Adrenal gland (tissue), 19 donors: ENCODE measurements at regions of chr11 and their contacts with region 1.

Region 1: DNA sequence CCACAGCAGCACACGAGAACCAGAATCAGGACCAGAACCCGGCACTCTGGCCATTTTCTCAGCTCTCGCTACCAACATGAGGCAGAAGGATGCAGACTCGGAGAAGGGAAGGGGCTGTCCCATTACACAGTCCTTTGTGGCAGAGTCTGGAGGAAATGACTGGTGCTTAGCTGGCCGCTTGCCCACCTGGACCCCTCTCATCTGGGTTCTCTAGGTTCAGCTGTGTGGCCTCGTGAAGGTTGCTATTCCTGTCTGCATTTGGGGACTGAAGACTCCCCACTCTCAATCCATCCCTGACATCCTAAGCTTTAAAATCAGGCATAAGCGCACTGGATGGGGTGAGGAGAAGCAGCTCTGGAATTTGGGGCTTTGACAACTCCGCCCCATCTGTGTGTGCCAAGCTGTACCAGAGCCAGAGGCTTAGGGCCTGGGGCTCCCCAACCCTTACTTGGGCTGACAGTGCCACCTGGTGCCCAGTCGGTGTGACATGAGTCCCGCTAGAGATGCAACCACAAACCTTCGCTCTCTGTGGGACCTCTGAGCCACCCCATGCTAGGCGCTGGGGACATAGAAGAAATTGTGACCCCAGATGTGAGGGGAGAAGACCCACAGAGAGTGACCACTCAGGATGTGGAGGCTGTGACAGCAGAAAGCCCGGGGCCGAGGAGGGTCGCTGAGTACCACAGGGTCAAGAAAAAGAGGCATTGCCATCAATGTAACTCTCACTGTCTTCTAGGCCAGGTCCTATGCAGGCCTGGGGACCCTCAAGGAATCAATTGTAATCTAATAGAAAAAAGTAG is 35.9 kb upstream of the FCHSD2 start:
- DNase-seq: peak; percentile 84 to 95 (median 93)
- H3K4me3 ChIP-seq: no peak overlapping the region
- H3K27ac ChIP-seq: peak overlapping the region; percentile 3 to 87 (median 62)
- H3K4me1 ChIP-seq: peaks cover 19 to 41% of the 10 kb centered on the region in 2 donors
- H3K27me3 ChIP-seq: no peaks in the 10 kb centered on the region
- CTCF ChIP-seq: peak; percentile 72 to 96 (median 90)
- POLR2A ChIP-seq: no peak

Region 2: DNA sequence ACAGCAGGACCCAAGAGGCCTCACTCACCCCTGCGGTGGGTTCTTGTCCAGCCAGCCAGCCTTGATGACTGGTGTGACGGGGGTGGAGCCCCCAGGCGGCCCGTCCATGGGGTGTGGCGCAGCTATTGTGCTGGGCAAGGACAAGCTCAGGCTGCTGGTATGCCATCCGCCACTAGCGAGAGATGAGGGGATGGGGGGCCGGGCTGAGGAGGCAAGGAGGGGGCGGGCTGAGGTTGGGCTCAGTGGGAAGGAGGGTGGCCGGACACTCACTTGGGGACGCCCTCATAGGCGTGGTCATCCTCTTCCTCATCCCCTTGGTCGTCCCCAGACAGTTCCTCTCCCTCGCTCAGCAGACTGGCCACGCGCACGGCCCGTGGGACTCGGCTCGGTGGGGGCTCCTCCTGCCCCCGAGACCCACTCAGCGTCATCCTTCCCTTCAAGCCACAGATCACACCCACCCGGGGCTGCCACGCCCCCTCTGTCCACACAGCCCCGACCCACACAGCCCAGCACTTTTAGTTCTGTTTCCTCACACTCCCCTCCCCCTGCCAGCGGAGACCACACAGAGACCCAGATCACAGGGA is 465.7 kb before region 1 on chr11:
- intact Hi-C with region 1: loop called in 1 of 2 experiments (anchors 10 kb)
- DNase-seq: peak; percentile 57 to 81 (median 69)
- H3K4me3 ChIP-seq: no peak overlapping the region
- H3K27ac ChIP-seq: peak overlapping the region in 2 of 5 donors; percentile 47 to 70
- H3K4me1 ChIP-seq: peaks cover 0 to 35% of the 10 kb centered on the region in 2 donors
- H3K27me3 ChIP-seq: no peaks in the 10 kb centered on the region
- CTCF ChIP-seq: no peak
- POLR2A ChIP-seq: no peak

Region 3: GRCh38 chr11:72924568-72925190 is 253.3 kb before region 1 on chr11:
- intact Hi-C with region 1: loop called in 1 of 2 experiments (anchors 5 kb)
- DNase-seq: no peak
- H3K4me3 ChIP-seq: no peak overlapping the region
- H3K27ac ChIP-seq: peak overlapping the region in 1 of 5 donors; percentile 2
- H3K4me1 ChIP-seq: peaks cover 19 to 28% of the 10 kb centered on the region in 2 donors
- H3K27me3 ChIP-seq: no peaks in the 10 kb centered on the region
- CTCF ChIP-seq: peak in 5 of 6 experiments; percentile 38 to 83 (median 59)
- POLR2A ChIP-seq: no peak

Region 4: GRCh38 chr11:73280651-73281071 is 102.7 kb after region 1 on chr11:
- intact Hi-C with region 1: no loop called
- DNase-seq: peak in 2 of 7 donors; percentile 45 to 53
- H3K4me3 ChIP-seq: no peak overlapping the region
- H3K27ac ChIP-seq: peak overlapping the region in 2 of 5 donors; percentile 17 to 84
- H3K4me1 ChIP-seq: peaks cover 0 to 5% of the 10 kb centered on the region in 2 donors
- H3K27me3 ChIP-seq: no peaks in the 10 kb centered on the region
- CTCF ChIP-seq: no peak
- POLR2A ChIP-seq: no peak

Region 5: DNA sequence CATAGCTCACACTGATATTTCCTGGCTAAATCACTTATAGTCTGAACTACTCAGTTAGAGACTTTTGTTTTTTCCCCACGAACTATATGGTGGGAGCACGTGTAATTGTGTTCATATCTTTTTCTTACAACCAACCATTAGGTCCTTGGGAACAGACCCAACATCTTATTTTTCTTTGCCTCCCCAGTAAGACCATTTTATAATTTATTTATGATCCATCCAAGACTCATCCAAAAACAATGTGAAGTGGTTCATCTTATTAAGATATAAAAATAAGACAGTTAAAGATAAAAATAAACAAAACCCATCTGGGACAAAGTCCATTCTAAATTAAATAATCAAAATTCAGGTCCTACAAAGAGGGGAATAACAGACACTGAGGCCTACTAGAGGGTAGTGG is 329.1 kb after region 1 on chr11:
- intact Hi-C with region 1: no loop called
- DNase-seq: no peak
- H3K4me3 ChIP-seq: no peak overlapping the region
- H3K27ac ChIP-seq: no peak overlapping the region
- H3K4me1 ChIP-seq: peaks cover 0 to 6% of the 10 kb centered on the region in 2 donors
- H3K27me3 ChIP-seq: no peaks in the 10 kb centered on the region
- CTCF ChIP-seq: no peak
- POLR2A ChIP-seq: no peak